MCF 10A (cell line): ENCODE measurements at regions of chr20 and their contacts with region 1.

Region 1: GRCh38 chr20:53578492-53579222 is 15.0 kb downstream of the ZNF217 start:
- DNase-seq: peak; percentile 91
- H3K4me3 Mint-ChIP-seq: peak overlapping the region; percentile 54
- H3K27ac Mint-ChIP-seq: peak overlapping the region; percentile 90
- H3K4me1 Mint-ChIP-seq: peaks cover 30% of the 10 kb centered on the region
- H3K27me3 Mint-ChIP-seq: no peaks in the 10 kb centered on the region
- CTCF ChIP-seq: peak; percentile 92

Region 2: DNA sequence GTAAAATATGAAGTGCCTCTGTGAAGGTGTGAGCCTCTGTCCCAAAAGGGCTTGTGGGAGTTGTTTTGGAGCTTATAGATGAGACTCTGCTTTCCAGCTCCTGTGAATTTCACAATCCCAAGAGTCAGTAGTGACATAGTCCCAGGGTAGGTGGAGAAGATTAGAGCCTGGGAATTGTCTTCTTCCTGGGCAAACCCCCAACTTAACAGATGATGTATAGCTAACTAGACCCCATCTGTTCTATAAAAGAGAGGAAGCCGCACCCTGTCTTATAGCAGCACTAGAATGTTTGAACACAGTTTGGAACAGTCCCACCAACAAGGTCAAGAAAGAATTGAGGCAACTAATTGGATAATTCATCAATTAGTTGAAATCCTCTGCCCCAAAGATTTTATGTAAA is 279.7 kb before region 1 on chr20:
- CTCF ChIA-PET with region 1: no interaction called
- POLR2A ChIA-PET with region 1: no interaction called
- intact Hi-C with region 1: no loop called
- DNase-seq: no peak
- H3K4me3 Mint-ChIP-seq: no peak overlapping the region
- H3K27ac Mint-ChIP-seq: no peak overlapping the region
- H3K4me1 Mint-ChIP-seq: no peaks in the 10 kb centered on the region
- H3K27me3 Mint-ChIP-seq: no peaks in the 10 kb centered on the region
- CTCF ChIP-seq: no peak

Region 3: DNA sequence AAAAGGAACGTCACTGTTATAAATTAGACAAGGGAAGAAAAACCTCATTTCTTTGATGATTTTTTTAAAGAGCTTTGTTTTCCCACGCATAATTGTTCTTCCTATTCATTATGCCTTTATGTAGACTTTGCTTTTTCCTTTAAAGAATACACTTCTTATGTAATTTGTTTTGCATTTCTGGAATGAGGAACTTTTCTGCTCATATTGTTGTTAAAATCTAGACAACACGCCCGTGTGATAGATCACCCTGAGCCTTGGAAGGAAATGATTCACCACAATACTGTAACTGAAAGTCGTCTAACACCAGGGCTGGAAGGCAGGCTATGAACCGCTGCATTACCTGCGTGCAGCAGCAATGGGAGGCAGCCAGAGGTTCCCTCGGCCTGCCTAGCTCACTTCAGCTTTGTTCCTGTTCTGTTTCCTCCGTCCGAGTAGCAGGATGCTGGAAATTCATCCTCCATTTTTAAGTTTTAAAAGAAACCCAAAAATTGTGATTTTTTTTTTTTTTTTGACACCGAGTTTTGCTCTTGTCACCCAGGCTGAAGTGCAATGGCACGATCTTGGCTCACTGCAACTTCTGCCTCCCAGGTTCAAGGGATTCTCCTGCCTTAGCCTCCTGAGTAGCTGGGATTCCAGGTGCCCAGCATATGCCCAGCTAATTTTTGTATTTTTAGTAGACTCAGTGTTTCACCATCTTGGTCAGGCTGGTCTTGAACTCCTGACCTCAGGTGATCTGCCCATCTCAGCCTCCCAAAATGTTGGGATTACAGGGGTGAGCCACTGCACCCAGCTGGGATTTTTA is 64.6 kb after region 1 on chr20:
- CTCF ChIA-PET with region 1: interaction called, 5 read pairs
- POLR2A ChIA-PET with region 1: interaction called, 17 read pairs
- intact Hi-C with region 1: no loop called
- DNase-seq: peak; percentile 79
- H3K4me3 Mint-ChIP-seq: peak overlapping the region; percentile 51
- H3K27ac Mint-ChIP-seq: peak overlapping the region; percentile 97
- H3K4me1 Mint-ChIP-seq: peaks cover 12% of the 10 kb centered on the region
- H3K27me3 Mint-ChIP-seq: no peaks in the 10 kb centered on the region
- CTCF ChIP-seq: no peak

Region 4: DNA sequence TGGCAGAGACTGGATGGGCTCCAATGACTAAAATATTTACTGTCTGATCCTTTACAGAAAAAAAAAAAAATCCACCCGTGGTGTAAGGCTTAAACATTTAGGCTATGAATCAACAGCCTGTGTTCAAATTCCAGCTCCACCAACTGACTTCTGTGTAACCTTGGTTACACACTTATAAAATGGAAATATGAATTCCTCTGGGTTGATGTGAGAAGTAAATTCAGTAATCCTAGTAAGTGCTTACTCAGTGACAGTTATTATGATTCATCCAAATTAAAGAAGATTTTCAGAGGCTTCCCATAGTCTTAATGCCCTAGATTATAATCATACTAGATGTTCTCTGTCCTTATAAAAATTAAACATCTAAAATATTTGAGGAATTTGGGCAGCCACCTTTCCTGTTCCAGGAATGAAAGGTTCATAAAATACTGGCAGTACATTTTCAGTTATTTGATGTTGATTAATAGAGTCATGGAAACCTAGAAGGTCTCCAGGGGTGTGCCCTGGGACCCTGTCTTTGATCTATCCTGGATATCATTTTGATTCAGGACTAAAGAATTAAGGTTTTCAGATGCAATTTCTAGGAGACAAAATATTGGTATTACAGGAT is 195.2 kb after region 1 on chr20:
- CTCF ChIA-PET with region 1: no interaction called
- POLR2A ChIA-PET with region 1: interaction called, 3 read pairs
- intact Hi-C with region 1: loop called (anchors 2 kb)
- DNase-seq: peak; percentile 79
- H3K4me3 Mint-ChIP-seq: no peak overlapping the region
- H3K27ac Mint-ChIP-seq: peak overlapping the region; percentile 92
- H3K4me1 Mint-ChIP-seq: peaks cover 21% of the 10 kb centered on the region
- H3K27me3 Mint-ChIP-seq: no peaks in the 10 kb centered on the region
- CTCF ChIP-seq: no peak

Region 5: DNA sequence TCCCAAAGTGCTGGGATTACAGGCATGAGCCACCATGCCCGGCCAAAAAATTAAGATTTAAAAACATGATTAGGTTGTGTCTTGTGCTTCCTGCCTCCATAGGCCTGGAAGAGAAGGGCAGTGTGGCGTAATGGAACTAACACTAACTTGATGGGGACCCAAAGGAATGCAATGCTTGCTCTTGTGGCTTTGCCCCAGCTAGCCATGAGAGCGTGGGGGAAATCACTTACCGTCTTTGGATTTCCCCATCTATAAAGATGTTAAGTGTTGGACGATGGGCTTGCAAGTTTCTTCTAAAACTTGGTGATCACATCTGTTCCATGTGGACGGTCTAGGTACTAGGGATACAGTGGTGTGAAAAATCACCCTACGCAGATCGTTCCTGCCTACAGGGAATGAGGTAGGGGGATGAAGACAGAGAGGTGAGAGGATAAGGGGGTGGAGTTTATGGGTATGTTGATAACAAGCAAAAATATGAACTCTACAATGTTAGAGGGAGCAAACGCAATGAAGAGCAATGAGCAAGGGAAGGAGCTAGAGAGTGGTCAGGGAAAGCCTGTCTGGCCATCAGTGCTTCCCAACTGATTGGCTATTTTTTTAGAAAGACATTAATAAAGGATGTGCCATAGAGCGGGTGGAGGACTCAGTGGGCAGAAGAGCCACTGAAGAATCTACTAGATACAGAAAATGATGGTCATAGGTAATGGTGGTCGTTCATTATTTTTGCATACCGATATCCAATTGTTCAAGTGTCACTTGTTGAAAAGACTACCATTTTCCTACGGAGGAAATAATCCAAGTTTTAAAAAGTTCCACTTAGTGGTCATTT is 326.6 kb after region 1 on chr20:
- CTCF ChIA-PET with region 1: interaction called, 17 read pairs
- POLR2A ChIA-PET with region 1: interaction called, 18 read pairs
- intact Hi-C with region 1: no loop called
- DNase-seq: no peak
- H3K4me3 Mint-ChIP-seq: no peak overlapping the region
- H3K27ac Mint-ChIP-seq: peak overlapping the region; percentile 93
- H3K4me1 Mint-ChIP-seq: peaks cover 52% of the 10 kb centered on the region
- H3K27me3 Mint-ChIP-seq: no peaks in the 10 kb centered on the region
- CTCF ChIP-seq: no peak

Region 6: DNA sequence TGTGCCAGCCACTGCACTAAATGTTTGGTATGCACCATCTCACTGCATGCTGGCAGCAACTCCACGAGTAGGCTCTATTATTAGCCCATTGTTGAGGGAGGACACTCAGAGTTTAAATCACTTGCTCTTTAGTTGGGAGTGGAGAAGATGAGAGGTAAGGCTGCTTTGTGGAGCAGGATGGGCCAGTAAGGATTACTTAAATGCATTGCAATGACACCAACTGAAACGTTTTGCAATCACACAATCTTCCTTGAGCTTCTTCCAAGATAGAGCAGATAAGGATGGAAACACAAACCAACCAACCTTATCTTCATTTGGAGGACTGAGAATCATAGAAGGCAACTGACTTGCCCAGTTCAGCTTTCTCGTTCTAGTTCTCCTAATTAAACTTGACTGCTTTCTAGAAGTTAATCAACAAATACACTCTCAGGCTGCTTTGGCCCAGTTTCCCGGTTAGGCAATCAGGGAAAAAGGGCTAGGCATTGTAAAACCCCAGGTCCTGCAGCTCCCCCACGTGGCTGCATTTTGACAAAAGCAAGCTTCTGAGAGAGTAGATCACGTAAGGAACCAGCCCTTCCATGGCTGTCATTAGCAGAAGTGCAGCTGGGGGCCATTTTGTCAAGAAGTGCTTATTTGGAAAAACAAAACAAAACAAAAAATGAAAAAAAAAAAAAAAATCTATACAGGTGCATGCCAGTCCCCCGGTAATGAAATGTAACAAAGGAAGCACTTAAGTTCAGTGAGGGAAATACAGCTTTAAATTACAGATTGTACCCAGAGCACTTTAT is 361.1 kb after region 1 on chr20:
- CTCF ChIA-PET with region 1: interaction called, 68 read pairs
- POLR2A ChIA-PET with region 1: interaction called, 40 read pairs
- intact Hi-C with region 1: loop called (anchors 1 kb)
- DNase-seq: peak; percentile 95
- H3K4me3 Mint-ChIP-seq: no peak overlapping the region
- H3K27ac Mint-ChIP-seq: peak overlapping the region; percentile 18
- H3K4me1 Mint-ChIP-seq: peaks cover 19% of the 10 kb centered on the region
- H3K27me3 Mint-ChIP-seq: no peaks in the 10 kb centered on the region
- CTCF ChIP-seq: peak; percentile 73